ENCODE measurements at regions of chr12 and their contacts with region 1.

Region 1: DNA sequence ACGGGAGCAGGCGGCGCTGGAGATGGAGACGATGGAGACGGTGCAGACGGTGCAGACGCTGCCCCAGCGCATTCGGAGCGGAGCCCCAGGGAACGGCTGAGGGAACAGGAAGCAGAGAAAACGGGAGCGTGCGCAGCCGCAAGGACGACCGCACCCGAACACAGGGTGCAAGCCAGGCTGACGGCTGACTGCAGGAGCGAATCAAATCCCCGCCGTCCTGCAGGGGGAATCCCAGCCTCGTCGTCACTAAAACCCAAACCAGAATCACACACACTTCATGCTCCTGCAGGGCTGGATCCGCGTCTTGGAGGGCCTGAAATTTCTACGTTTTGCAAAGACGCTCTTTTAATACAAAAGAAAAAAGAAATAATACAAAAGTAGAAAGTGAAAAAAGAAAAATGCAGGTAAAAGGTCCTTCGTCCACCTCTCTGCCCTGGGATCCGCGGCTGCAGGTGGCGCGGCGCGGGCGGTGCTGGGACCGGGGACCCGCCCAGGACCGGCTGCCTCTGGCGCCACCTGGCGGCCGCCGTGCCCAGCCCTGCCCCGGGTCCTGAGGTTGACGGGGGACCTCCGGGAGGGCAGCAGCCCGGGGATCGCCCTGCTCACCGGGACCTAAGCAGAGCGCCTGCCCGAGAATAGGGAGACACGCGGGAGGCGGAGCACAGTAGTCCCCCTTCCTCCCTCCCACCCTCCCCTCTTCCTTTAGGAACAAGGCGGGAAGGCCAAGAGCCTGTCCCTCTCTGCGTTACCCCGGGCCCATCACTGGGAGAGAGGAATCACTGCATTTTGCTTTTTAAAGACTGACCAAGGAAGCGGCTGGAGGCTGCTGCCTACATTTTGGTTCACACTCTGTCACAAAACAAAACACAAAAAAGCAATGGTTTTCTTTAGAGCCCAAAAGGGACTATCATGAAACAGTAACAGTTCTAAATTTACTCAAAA is 20.1 kb downstream of the STX2 start:
- DNase-seq: peak; percentile 94
- H3K4me3 Mint-ChIP-seq: peak overlapping the region; percentile 83
- H3K27ac Mint-ChIP-seq: peak overlapping the region; percentile 53
- H3K4me1 Mint-ChIP-seq: peaks cover 4% of the 10 kb centered on the region
- H3K27me3 Mint-ChIP-seq: no peaks in the 10 kb centered on the region

Region 2: GRCh38 chr12:130761537-130762318 is 57.2 kb before region 1 on chr12:
- intact Hi-C with region 1: loop called (anchors 1 kb)
- DNase-seq: peak; percentile 85
- H3K4me3 Mint-ChIP-seq: peak overlapping the region; percentile 60
- H3K27ac Mint-ChIP-seq: no peak overlapping the region
- H3K4me1 Mint-ChIP-seq: peaks cover 12% of the 10 kb centered on the region
- H3K27me3 Mint-ChIP-seq: peaks cover 4% of the 10 kb centered on the region

Region 3: DNA sequence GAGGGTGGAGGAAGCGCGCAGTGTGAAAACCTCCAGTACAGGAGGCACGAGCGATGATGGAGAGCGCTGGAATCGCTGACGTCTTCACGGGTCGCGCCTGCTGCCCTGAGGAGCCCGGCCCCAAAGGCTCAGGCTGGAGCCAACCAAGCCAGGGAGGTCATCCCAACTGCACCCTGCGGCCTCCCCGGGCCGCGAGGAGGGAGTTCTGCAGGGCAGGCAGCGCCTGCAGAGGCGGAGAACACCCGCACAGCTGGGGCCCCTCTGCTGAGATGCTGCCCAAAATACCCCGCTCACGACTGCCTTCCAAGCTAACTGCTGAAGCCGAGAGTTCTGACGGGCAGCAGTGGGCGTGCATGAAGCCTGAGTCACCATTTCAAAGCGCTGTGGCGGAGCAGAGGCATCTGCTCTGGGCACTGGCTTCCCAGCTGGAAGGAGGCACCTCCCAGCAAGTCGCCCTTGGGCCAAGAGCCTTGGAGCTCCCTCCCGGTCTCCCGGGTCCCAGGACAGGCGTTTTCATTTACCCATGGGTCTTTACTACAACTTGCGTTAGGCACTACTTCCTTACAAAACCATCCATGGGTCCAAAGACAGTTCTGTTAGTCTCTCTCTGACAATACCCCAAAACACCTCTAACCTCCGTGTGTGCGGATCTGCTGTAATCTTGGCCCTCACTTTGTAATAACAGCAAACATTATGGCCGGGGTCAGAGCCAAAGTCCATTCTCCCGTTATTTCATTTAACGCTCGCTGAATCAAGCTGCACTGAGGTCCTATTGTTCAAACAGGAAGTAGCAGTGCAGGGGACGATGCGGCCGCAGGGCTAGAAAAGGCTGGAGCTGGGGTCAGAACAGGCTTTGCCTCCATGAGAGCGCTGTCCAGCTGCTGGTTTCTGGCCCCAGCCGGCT is 42.7 kb before region 1 on chr12:
- intact Hi-C with region 1: loop called (anchors 5 kb)
- DNase-seq: peak; percentile 75
- H3K4me3 Mint-ChIP-seq: peak overlapping the region; percentile 70
- H3K27ac Mint-ChIP-seq: no peak overlapping the region
- H3K4me1 Mint-ChIP-seq: peaks cover 12% of the 10 kb centered on the region
- H3K27me3 Mint-ChIP-seq: peaks cover 27% of the 10 kb centered on the region

Region 4: DNA sequence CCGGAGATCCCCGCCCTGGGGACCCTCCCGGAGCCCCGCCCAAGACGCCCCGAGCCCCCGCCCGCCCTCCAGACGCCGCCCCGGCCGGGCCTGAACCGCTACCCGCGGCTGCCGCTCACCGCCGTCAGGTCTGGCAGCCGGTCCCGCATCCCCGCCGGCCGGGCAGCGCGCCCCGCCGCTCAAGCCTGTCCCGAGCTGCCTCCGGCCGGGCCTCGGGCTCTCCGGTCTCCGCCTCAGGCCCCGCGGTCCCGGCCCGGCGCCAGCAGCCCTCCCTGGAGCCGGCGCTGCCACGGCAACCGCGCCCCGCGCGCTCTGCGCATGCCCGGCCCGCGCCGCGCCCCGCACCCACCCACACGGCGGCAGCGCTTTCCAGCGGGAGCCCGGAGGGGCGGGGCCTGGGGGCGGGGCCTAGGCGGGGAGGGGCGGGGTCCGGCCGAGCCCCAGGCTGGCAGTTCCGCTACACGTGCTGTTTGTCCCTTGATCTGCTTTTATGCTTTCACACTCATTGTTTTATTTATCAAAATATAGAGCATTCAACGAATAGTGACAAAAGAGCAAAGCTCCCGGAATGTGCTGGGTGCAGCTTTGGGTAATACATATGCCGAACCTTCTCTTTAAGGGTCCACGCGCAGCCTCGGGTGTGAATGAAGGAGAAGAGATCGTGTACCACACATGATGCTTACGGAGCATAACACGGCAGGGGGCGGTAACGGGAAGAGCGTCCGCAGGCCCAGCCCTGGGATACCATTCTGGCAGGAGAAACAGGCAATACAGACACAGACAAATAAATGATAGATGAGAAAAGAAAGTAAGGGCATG is 20.3 kb after region 1 on chr12 and contains the start of gene STX2:
- intact Hi-C with region 1: loop called (anchors 1 kb)
- DNase-seq: peak; percentile 98
- H3K4me3 Mint-ChIP-seq: peak within 1 kb of the TSS; percentile 88
- H3K27ac Mint-ChIP-seq: peak within 1 kb of the TSS; percentile 67
- H3K4me1 Mint-ChIP-seq: peaks cover 19% of the 10 kb centered on the region
- H3K27me3 Mint-ChIP-seq: no peaks in the 10 kb centered on the region
- total RNA-seq, gene STX2: 18.2 and 19.2 TPM in 2 replicates

Region 5: GRCh38 chr12:130849561-130850417 is 30.9 kb after region 1 on chr12:
- intact Hi-C with region 1: no loop called
- DNase-seq: no peak
- H3K4me3 Mint-ChIP-seq: no peak overlapping the region
- H3K27ac Mint-ChIP-seq: no peak overlapping the region
- H3K4me1 Mint-ChIP-seq: no peaks in the 10 kb centered on the region
- H3K27me3 Mint-ChIP-seq: peaks cover 8% of the 10 kb centered on the region

Measured in activated CD4-positive, alpha-beta T cell treated with anti-CD3 and anti-CD28 coated beads, Interleukin-2, amount 10 ng/mL, durations not matched to agents 24 days and 14 days (primary cell).